HEK293T (cell line): ENCODE measurements at regions of chr2 and their contacts with region 1.

Region 1: GRCh38 chr2:217291252-217291651 is 431.4 kb upstream of the TNP1 start:
- DNase-seq: no peak

Region 2: DNA sequence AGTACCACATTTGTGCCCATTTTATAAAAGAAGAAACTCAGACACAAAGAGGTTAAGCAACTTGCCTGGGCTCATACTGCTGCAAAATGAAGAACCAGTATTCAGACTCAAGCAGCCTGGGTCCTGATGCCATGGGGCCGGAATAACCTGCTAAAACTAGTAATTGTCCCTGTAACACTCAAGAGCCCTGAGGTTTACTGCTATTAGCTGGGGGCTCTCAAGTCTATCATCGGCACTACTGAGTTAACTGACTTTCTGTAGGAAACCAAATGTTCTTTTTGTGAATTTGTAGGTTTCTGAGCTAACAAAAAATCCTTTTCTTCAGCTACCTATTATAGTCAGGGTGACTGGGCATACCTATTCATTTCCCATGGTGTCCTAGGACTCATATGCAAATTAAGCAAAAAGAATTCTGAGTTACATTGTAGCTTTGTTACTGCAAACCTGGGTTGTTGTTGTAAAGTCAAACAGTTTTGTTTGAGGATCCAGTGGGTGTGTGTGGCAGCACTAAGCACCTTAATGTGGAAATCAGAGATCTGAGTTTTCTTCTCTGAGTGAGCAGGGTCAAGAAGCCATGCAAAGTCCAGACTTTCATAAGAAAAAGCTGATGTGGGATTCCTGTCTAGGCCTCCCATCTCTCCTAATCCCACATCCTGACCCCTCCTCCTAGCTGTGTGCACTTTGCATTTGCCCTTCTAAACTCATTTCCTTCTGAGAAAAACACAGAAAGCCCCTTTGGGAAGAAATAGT is 359.0 kb before region 1 on chr2:
- CTCF ChIA-PET with region 1: interaction called, 13 read pairs
- POLR2A ChIA-PET with region 1: no interaction called
- DNase-seq: no peak

Region 3: GRCh38 chr2:217459680-217460405 is 168.6 kb after region 1 on chr2:
- CTCF ChIA-PET with region 1: no interaction called
- POLR2A ChIA-PET with region 1: no interaction called
- DNase-seq: no peak